Activated CD4-positive, alpha-beta T cell treated with anti-CD3 and anti-CD28 coated beads for 36 hours (primary cell): ENCODE measurements at regions of chr19 and their contacts with region 1.

Region 1: GRCh38 chr19:33778089-33778791 is 18.4 kb upstream of the KCTD15 start:
- DNase-seq: peak; percentile 92
- ATAC-seq: peak; percentile 98
- H3K4me3 Mint-ChIP-seq: no peak overlapping the region
- H3K27ac Mint-ChIP-seq: no peak overlapping the region
- H3K4me1 Mint-ChIP-seq: peaks cover 3% of the 10 kb centered on the region
- H3K27me3 Mint-ChIP-seq: peaks cover 25% of the 10 kb centered on the region

Region 2: DNA sequence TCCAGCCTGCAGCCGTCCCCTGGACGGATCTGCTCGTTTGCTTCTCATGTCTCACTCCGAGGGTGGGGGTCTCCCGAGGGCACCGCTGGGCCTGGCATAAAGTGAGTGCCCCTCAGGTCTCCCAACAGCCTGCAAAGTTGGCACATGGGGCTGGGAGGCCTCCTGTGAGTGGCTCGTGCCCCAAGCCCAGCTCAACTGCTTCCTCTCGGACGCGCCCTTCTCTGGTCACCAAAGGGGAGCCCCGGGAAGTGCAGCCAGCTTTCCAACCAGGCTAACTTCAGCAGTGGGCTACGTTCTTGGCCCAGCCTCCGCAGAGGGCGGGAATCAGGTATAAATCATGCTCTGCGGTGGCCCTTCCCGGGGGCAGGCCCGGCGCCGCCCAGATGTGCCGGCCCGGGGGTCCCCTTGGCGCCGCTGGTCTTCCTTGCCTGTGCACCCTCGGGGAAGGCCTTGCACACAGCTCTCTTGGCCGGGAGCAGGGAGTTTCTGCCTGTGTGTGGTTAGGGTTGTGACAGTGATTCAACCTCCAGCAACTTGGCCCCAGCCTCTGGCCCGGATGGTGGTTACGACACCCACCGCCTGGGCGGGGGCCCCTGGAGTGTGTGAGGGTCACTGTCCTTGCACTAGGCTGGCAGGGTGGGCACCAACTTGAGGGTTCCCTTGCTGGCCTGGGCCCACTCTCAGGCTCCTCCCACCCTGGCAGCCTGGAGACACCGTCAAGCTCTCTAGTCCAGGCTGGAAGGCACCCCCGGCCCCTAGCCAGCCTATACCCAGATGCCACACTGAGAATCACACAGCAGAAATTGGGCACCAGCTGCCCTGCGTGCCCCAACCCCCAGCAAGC is 384.0 kb before region 1 on chr19:
- CTCF ChIA-PET with region 1: no interaction called
- POLR2A ChIA-PET with region 1: no interaction called
- intact Hi-C with region 1: no loop called
- DNase-seq: no peak
- ATAC-seq: no peak
- H3K4me3 Mint-ChIP-seq: no peak overlapping the region
- H3K27ac Mint-ChIP-seq: no peak overlapping the region
- H3K4me1 Mint-ChIP-seq: no peaks in the 10 kb centered on the region
- H3K27me3 Mint-ChIP-seq: no peaks in the 10 kb centered on the region

Region 3: DNA sequence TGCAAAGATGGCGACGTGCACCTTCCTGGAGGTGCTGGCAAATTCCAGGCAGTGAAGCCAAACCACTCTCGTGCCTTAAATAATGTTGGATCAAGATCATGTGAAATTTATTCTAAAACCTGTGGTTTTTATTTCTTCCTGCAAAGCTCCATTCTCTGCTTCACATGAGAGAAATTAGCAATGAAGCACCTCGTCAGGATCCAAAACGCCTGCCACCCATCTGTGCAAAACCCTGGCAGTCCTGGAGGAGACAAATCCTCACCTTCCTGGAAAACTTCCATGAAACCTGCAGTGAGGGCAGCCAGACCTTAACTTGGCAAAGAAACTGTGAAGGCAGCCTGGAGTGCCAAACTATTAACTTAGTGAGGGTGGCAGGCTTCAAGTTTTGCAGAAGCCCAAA is 108.9 kb before region 1 on chr19:
- CTCF ChIA-PET with region 1: no interaction called
- POLR2A ChIA-PET with region 1: no interaction called
- intact Hi-C with region 1: no loop called
- DNase-seq: no peak
- ATAC-seq: no peak
- H3K4me3 Mint-ChIP-seq: no peak overlapping the region
- H3K27ac Mint-ChIP-seq: no peak overlapping the region
- H3K4me1 Mint-ChIP-seq: no peaks in the 10 kb centered on the region
- H3K27me3 Mint-ChIP-seq: peaks cover 5% of the 10 kb centered on the region

Region 4: GRCh38 chr19:33795370-33796163 is 17.3 kb after region 1 on chr19:
- CTCF ChIA-PET with region 1: interaction called, 17 read pairs
- POLR2A ChIA-PET with region 1: no interaction called
- intact Hi-C with region 1: loop called in 1 of 2 experiments (anchors 1 kb)
- DNase-seq: peak; percentile 77
- ATAC-seq: peak; percentile 59
- H3K4me3 Mint-ChIP-seq: peak overlapping the region; percentile 72
- H3K27ac Mint-ChIP-seq: no peak overlapping the region
- H3K4me1 Mint-ChIP-seq: peaks cover 2% of the 10 kb centered on the region
- H3K27me3 Mint-ChIP-seq: peaks cover 24% of the 10 kb centered on the region

Region 5: GRCh38 chr19:34041925-34042521 is 263.8 kb after region 1 on chr19:
- CTCF ChIA-PET with region 1: interaction called, 14 read pairs
- POLR2A ChIA-PET with region 1: no interaction called
- intact Hi-C with region 1: loop called in 1 of 2 experiments (anchors 2 kb)
- DNase-seq: peak; percentile 91
- ATAC-seq: peak; percentile 71
- H3K4me3 Mint-ChIP-seq: no peak overlapping the region
- H3K27ac Mint-ChIP-seq: no peak overlapping the region
- H3K4me1 Mint-ChIP-seq: peaks cover 3% of the 10 kb centered on the region
- H3K27me3 Mint-ChIP-seq: peaks cover 10% of the 10 kb centered on the region

Region 6: GRCh38 chr19:34145741-34146202 is 367.5 kb after region 1 on chr19:
- CTCF ChIA-PET with region 1: interaction called, 7 read pairs
- POLR2A ChIA-PET with region 1: no interaction called
- intact Hi-C with region 1: loop called (anchors 1 kb)
- DNase-seq: peak; percentile 72
- ATAC-seq: peak; percentile 79
- H3K4me3 Mint-ChIP-seq: no peak overlapping the region
- H3K27ac Mint-ChIP-seq: no peak overlapping the region
- H3K4me1 Mint-ChIP-seq: no peaks in the 10 kb centered on the region
- H3K27me3 Mint-ChIP-seq: no peaks in the 10 kb centered on the region

Region 7: DNA sequence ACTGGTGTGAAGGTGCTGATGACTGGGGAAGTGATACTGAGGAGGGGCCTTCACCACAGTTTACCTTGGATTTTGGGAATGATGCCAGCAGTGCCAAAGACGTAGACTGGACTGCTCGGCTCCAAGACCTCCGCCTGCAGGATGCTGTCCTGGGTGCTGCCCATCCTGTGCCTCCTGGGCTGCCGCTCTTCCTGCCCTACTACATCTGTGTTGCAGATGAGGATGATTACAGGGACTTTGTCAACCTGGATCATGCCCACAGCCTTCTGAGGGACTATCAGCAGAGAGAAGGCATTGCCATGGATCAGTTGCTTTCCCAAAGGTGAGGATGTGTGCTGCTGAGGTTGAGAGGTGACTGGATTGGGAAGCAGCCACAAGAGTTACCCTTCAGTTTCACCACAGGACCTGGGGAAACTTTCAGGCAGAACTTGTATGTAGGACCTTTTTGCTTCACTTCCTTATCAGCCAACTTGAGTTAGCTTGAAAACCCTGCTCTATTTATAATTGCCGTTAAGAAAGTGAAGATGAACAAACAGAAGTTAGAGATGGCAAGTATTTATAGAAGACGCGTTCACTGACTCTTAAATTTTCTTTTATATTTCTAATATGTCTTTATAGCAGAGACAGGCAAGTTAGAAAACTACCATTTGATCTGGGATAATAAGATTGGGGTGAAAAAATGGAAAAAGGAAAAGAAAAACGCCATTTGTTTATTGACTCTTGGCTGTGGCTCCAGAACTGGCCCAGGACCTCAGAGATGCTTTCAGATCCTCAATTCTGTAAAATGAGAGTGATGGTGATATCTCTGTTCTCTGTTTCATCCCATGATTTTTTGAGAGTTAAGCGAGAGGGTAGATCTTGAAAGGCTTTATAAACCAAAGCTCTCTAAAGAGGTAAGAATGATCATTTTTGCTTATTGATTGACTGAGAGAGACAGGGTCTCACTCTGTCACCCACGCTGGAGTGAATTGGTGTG is 631.2 kb after region 1 on chr19:
- CTCF ChIA-PET with region 1: no interaction called
- POLR2A ChIA-PET with region 1: no interaction called
- intact Hi-C with region 1: no loop called
- DNase-seq: no peak
- ATAC-seq: no peak
- H3K4me3 Mint-ChIP-seq: no peak overlapping the region
- H3K27ac Mint-ChIP-seq: no peak overlapping the region
- H3K4me1 Mint-ChIP-seq: peaks cover 17% of the 10 kb centered on the region
- H3K27me3 Mint-ChIP-seq: no peaks in the 10 kb centered on the region